Heart right ventricle (tissue), 16 donors: ENCODE measurements at regions of chr6 and their contacts with region 1.

Region 1: GRCh38 chr6:43683708-43684455 is 3.7 kb downstream of the MRPS18A start:
- DNase-seq: no peak
- ATAC-seq: no peak
- H3K4me3 ChIP-seq: no peak overlapping the region
- H3K27ac ChIP-seq: peak overlapping the region in 8 of 10 donors; percentile 1 to 66 (median 49)
- H3K4me1 ChIP-seq: peaks cover 10 to 81% (median 43%) of the 10 kb centered on the region in 9 donors
- H3K27me3 ChIP-seq: no peaks in the 10 kb centered on the region
- CTCF ChIP-seq: no peak

Region 2: DNA sequence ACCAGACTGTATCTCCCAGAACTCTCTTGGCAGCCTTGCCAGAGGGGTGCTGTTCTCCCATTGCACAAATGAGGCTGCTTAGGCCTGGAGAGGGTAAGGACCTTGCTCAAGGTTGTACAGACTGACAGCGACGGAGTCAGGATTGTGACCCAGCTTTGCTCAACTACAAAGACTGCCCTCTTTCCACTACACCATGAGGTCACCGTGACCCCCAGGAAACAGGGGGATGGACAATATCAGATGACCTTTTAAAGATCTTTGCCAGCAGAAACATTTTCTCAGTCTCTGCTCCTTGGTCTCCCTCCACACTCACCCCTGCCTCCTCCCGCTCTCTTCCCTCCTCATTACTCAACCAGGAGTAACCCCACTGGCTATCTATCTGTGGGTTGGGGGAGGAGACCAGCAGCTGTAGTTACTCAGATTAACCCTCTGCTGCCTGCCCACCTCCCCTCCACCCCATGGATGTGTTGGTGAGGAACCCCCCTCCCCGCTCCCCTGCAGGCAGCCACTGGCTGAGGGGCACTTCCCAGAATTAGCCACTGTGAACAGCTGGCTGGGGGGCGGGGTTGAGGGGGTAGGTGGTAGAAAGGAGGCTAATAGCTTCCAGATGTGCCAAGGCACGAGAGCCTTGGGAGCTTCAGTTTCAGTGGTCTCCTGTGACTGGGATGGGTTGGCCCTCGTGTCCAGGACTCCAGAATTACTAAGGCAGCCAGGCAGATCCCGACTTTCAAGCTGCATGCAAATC is 30.6 kb after region 1 on chr6:
- intact Hi-C with region 1: loop called in 2 of 10 experiments (anchors 5 kb)
- DNase-seq: peak in 1 of 2 donors; percentile 37
- ATAC-seq: peak in 2 of 8 donors; percentile 12 to 34
- H3K4me3 ChIP-seq: no peak overlapping the region
- H3K27ac ChIP-seq: peak overlapping the region in 5 of 10 donors; percentile 10 to 54 (median 27)
- H3K4me1 ChIP-seq: peaks cover 4 to 67% (median 41%) of the 10 kb centered on the region in 9 donors
- H3K27me3 ChIP-seq: no peaks in the 10 kb centered on the region
- CTCF ChIP-seq: no peak

Region 3: DNA sequence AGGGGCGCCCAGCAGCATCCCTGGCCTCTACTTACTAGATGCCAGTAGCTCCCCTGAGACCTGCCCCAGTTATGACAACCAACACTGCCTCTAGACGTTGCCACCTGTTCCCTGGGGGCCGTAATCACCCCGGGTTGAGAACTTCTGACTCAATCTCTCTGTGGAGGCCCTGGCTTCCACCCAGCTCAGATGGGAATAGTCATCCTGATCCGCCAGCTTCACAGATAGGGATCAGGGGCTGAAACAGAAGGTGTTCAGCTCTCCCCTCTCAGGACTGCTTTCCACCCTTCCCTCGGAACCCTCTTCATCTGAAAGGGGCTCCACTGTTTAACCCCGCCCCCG is 478.1 kb after region 1 on chr6:
- intact Hi-C with region 1: no loop called
- DNase-seq: no peak
- ATAC-seq: no peak
- H3K4me3 ChIP-seq: no peak overlapping the region
- H3K27ac ChIP-seq: no peak overlapping the region
- H3K4me1 ChIP-seq: no peaks in the 10 kb centered on the region
- H3K27me3 ChIP-seq: peaks cover 0 to 5% (median 0%) of the 10 kb centered on the region in 7 donors
- CTCF ChIP-seq: no peak